Activated T-helper 1 cell treated with anti-CD3 and anti-CD28 coated beads, Interleukin-12 subunit alpha, Interleukin-12 subunit beta, Interleukin-2, Interleukin-4 antibody, amounts not matched to agents 30 ng/mL and 10 ng/mL and 1 ng/mL, durations not matched to agents 14 hours and 24 hours and 36 hours (primary cell): ENCODE measurements at regions of chr2 and their contacts with region 1.

Region 1: GRCh38 chr2:238370823-238371372 is 50.6 kb downstream of the TRAF3IP1 start:
- DNase-seq: peak; percentile 20
- H3K4me3 Mint-ChIP-seq: no peak overlapping the region
- H3K27ac Mint-ChIP-seq: no peak overlapping the region
- H3K4me1 Mint-ChIP-seq: no peaks in the 10 kb centered on the region
- H3K27me3 Mint-ChIP-seq: peaks cover 5% of the 10 kb centered on the region

Region 2: GRCh38 chr2:238462782-238463396 is 92.0 kb after region 1 on chr2:
- intact Hi-C with region 1: loop called (anchors 1 kb)
- DNase-seq: no peak
- H3K4me3 Mint-ChIP-seq: no peak overlapping the region
- H3K27ac Mint-ChIP-seq: no peak overlapping the region
- H3K4me1 Mint-ChIP-seq: no peaks in the 10 kb centered on the region
- H3K27me3 Mint-ChIP-seq: peaks cover 7% of the 10 kb centered on the region

Region 3: DNA sequence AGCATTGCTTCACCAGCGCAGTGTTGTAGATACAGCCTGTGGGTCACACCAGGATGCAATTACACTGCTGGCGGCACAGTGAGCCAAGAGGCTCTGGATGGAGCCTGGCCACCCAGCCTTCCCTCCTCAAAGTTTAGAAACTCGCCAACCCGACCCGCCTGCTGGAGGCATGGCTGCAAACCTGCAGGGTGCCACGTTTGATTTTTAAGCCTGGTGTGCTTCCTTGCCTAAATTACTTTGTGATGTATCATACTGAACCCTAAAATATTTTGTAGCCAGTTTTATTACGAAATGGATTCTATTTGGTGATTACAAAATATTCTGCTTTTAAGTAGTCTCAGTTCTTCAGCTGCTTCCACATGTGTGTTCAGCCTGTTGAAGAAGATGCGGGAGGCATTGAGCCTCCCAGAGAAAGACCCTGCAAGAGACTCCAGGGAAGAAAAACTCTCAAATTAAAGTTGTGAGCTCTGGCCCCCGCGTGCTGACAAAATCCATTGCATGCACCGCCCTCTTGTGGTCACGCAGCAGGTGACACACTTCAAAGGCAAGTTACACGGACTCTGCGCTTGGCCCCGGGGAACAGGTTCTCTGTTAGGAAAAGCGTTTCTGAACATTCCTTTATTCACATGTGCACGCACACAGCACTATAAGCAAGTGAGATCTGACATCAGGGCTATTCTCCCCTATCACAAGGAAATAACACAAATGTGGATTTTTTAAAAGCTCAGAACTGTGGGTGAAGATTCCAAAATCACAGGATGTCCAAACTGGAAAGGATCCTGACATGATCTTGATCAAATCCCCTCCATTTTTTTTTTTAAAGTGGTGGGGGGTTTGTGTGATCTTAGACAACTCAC is 414.0 kb after region 1 on chr2:
- intact Hi-C with region 1: loop called (anchors 2 kb)
- DNase-seq: peak; percentile 12
- H3K4me3 Mint-ChIP-seq: no peak overlapping the region
- H3K27ac Mint-ChIP-seq: no peak overlapping the region
- H3K4me1 Mint-ChIP-seq: no peaks in the 10 kb centered on the region
- H3K27me3 Mint-ChIP-seq: peaks cover 8% of the 10 kb centered on the region